HepG2 (cell line): ENCODE measurements at regions of chr5 and their contacts with region 1.

Region 1: DNA sequence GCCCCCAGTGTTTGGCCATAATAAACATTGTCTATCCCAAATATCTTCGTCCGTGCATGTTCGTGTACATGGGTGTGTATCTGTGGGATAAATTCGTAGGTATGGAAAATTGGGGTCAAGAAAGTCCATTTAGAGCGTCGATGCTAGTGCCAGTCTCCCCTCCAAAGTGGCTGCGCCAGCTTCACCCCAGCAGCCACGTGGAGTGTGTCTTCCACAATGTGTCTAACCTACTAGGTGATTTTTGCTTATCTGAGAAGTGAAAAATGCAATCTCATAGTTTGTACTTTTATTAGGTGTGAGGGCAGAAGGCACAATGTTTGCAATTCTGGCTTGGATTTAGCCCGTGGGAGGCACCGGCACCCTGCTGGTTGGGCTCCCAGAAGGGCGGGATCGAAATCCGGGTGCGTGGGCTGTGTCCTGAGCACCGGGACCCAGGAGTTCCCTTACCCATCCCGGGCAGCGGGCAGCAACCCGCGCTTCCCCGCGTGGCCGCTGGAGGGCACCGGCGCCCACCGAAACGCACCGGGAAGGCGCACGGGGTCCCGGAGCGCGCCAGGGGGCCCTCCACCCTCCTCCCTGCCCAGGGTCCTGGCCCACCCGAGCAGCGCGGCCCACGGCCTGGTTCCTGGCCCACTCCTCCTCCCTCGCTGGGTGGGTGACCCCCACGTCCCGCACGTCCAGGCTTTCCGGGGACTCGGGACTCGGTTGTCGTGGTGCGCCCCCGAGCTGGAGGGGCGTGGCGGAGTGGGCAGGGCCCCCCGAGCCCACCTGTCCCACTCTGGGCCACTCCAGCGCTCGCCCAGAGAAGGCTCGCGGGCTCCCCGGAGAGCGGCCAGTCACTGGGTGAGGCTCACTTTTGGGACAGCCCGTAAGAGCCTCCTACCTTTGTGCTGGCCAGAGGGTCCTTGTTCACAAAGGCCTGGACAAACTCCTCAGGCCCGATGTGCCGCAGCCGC is 55.4 kb upstream of the RNF130 start:
- DNase-seq: no peak
- ATAC-seq: peak; percentile 79
- H3K4me3 ChIP-seq: peak overlapping the region in 1 of 3 experiments; percentile 16; a peak in 1 of 6 replicates
- H3K27ac ChIP-seq: no peak overlapping the region
- H3K4me1 ChIP-seq: no peaks in the 10 kb centered on the region
- H3K27me3 ChIP-seq: peaks cover 8 to 56% of the 10 kb centered on the region in 2 experiments
- CTCF ChIP-seq: peak; percentile 91
- EP300 ChIP-seq: no peak
- POLR2A ChIP-seq: no peak
- RAD21 ChIP-seq: peak; percentile 82

Region 2: DNA sequence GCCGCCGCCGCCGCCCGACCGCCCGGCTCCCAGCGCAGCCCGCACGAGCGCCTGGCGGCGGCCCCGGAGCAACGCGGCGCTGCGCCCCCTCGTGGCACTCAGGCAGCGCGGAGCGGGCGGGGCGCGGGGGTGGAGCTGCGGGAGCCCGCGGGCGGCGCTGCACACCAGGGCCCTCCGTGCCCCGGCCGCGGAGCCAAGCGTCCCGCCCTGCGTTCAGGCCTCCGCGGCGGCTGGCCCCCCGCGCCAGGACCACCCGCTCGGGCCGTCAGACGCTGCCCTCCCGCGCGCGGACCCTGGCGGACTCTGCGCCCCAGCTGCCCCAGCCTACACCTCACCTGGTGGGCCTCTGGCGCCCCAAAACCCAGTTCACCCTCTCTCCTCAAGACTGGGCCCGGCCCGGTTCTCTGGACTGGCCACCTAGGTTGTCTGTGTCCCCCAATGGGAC is 82.2 kb after region 1 on chr5 and contains the start of gene RASGEF1C:
- CTCF ChIA-PET with region 1: interaction called, 5 read pairs
- POLR2A ChIA-PET with region 1: no interaction called
- in situ Hi-C with region 1: loop called (anchors 5 kb)
- intact Hi-C with region 1: loop called (anchors 10 kb)
- DNase-seq: peak; percentile 16
- ATAC-seq: peak; percentile 86
- H3K4me3 ChIP-seq: peak within 1 kb of the TSS; percentile 21 to 61 (median 50); a peak in 4 of 6 replicates
- H3K27ac ChIP-seq: no peak within 1 kb of the TSS
- H3K4me1 ChIP-seq: peaks cover 11% of the 10 kb centered on the region
- H3K27me3 ChIP-seq: peaks cover 0 to 22% of the 10 kb centered on the region in 2 experiments; a peak in 3 of 5 replicates
- CTCF ChIP-seq: peak; percentile 48; the same call in 1 of the 2 replicates
- EP300 ChIP-seq: no peak
- POLR2A ChIP-seq: no peak
- RAD21 ChIP-seq: peak; percentile 79
- total RNA-seq, gene RASGEF1C: not detected in 2 replicates